OCI-LY7 (cell line): ENCODE measurements at regions of chr17 and their contacts with region 1.

Region 1: GRCh38 chr17:49210158-49211029 is at the starts of genes ABI3 and GNGT2:
- DNase-seq: peak; percentile 94
- H3K4me3 ChIP-seq: peak within 1 kb of the TSS; percentile 82
- H3K27ac ChIP-seq: peak within 1 kb of the TSS; percentile 92
- H3K4me1 ChIP-seq: peaks cover 52% of the 10 kb centered on the region
- CTCF ChIP-seq: no peak
- total RNA-seq, gene ABI3: 16.8 and 24.0 TPM in 2 replicates
- total RNA-seq, gene GNGT2: 13.3 and 15.4 TPM in 2 replicates

Region 2: DNA sequence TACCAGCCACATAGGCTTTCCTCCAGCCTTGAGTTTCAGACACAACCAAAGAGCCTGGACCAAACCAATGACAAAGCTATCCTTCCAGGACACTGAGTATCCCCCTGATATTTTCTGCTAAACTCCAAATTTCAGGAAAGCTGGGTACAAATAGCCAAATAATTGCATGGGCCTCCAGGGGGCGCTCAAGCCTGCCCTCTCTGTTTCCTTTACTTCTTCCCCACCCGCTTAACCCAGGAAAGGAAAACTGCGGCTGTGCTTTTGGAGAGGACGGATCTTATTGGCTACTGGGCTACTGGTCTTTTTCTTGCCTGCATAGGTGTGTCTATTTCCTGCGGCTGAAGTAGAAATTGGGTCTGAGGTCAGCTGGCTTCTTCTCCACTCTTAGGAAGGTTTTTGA is 30.1 kb before region 1 on chr17:
- CTCF ChIA-PET with region 1: interaction called, 14 read pairs
- POLR2A ChIA-PET with region 1: interaction called, 3 read pairs
- intact Hi-C with region 1: no loop called
- DNase-seq: peak; percentile 65
- H3K4me3 ChIP-seq: no peak overlapping the region
- H3K27ac ChIP-seq: no peak overlapping the region
- H3K4me1 ChIP-seq: peaks cover 6% of the 10 kb centered on the region
- CTCF ChIP-seq: peak; percentile 97

Region 3: GRCh38 chr17:49191917-49192741 is 18.3 kb before region 1 on chr17:
- CTCF ChIA-PET with region 1: interaction called, 4 read pairs
- POLR2A ChIA-PET with region 1: interaction called, 45 read pairs
- intact Hi-C with region 1: loop called (anchors 1 kb)
- DNase-seq: peak; percentile 92
- H3K4me3 ChIP-seq: peak overlapping the region; percentile 78
- H3K27ac ChIP-seq: peak overlapping the region; percentile 96
- H3K4me1 ChIP-seq: peaks cover 33% of the 10 kb centered on the region
- CTCF ChIP-seq: peak; percentile 72

Region 4: DNA sequence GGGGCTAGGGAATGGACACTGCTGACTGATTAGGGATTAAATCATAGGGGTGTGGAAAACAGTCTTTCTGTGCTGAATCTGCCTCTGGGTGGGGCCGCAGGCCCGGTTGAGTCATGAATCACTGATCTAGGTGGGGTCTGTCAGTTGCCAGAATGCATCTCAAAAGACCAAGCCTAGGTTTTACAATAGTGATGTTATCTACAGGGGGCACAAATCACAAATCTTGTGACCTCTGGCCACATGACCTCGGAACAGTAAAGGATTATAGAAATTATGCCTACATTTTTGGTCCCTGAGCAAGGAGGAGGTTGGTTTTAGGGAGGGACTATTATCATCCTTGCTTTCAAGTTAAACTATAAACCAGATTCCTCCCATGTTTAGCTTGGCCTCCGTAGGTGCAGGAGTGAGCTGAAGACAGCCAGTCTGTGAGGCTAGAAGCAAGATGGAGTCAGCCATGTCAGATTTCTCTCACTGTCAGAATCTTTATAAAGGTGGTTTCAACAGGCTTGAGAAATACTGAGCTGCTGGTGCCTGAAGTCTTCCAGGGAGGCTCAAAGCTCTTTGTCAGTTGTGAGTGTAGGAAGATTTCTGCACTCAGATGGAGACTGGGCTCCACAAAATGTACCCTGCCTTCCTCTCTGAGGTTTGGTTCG is 12.9 kb before region 1 on chr17:
- CTCF ChIA-PET with region 1: interaction called, 4 read pairs
- POLR2A ChIA-PET with region 1: interaction called, 45 read pairs
- intact Hi-C with region 1: loop called (anchors 1 kb)
- DNase-seq: no peak
- H3K4me3 ChIP-seq: no peak overlapping the region
- H3K27ac ChIP-seq: no peak overlapping the region
- H3K4me1 ChIP-seq: peaks cover 18% of the 10 kb centered on the region
- CTCF ChIP-seq: no peak

Region 5: DNA sequence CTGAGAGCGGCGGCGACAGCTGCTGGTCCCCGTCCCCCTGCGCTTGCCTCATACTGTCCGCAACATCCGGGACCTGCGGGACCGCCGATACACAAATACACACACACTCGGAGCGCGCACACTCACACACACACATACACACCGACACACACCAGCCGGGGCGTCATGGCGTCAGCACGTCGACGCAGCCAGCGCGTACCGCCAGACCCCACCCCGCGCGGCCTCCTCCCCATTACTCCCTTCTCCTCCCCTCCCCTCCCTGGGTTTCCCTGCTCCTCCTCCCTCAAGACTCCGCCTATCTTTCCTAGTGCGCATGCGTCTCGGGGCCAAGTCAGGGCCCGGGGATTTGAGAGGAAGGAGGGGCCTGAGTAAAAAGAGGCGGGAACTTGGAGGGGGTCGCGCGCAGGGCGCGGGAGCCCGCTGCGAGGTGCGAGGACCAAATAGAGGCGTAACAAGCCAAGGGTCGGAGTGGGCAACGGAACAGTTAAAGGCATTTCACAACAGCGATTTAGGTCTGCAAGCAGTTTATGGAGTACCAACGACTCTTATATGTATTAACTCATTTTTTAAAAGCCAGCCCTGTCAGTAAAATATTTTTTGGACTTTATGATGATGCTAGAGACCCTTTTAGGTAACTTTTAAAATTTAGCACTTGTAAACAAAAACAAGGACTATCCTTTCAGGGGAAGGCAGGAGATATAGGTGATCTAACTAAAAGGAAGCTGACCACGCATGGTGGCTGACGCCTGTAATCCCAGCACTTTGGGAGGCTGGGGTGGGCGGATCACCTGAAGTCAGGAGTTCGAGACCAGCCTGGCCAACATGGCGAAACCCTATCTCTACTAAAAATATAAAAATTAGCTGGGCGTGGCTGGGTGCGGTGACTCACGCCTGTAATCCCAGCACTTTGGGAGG is 467.8 kb after region 1 on chr17 and contains the start of gene SPOP:
- CTCF ChIA-PET with region 1: no interaction called
- POLR2A ChIA-PET with region 1: no interaction called
- intact Hi-C with region 1: loop called (anchors 10 kb)
- DNase-seq: peak; percentile 99
- H3K4me3 ChIP-seq: peak within 1 kb of the TSS; percentile 87
- H3K27ac ChIP-seq: peak within 1 kb of the TSS; percentile 88
- H3K4me1 ChIP-seq: peaks cover 24% of the 10 kb centered on the region
- CTCF ChIP-seq: no peak
- total RNA-seq, gene SPOP: 37.8 and 61.0 TPM in 2 replicates

Region 6: DNA sequence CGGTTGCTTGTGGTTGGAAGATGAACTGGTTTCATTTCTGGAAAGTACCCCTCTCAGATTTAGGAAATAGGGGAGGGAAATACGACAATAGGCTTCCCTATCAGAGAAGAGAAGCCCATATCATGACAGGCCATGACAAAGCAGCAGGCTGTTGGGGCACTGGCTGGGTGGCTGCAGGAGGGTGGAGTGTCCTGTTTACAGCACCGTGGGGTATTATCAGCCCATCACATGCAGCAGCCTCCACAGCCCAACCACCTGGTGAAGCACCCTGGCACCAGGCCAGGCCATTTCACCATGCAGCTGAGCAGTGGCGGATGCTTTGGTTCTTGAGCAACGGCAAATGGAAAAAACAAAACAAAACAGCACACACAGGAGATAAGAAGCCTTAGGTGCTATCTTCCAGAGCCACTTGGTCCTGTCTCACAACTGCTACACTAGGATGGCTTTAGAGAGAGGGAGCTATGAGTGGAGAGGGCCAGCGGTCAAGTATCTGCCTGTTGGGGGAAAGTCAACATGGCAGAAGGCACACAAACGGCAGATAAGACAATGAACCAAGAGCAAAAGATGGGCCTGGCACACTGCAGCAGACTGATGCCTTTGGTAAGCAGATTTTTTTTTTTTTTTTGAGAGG is 529.4 kb after region 1 on chr17:
- CTCF ChIA-PET with region 1: no interaction called
- POLR2A ChIA-PET with region 1: no interaction called
- intact Hi-C with region 1: loop called (anchors 10 kb)
- DNase-seq: peak; percentile 96
- H3K4me3 ChIP-seq: peak overlapping the region; percentile 62
- H3K27ac ChIP-seq: peak overlapping the region; percentile 94
- H3K4me1 ChIP-seq: peaks cover 78% of the 10 kb centered on the region
- CTCF ChIP-seq: no peak